BJ (cell line): ENCODE measurements at regions of chr12 and their contacts with region 1.

Region 1: GRCh38 chr12:32155961-32156529 is 49.4 kb downstream of the BICD1 start:
- DNase-seq: no peak
- H3K4me3 ChIP-seq: no peak overlapping the region
- H3K27me3 ChIP-seq: no peaks in the 10 kb centered on the region
- CTCF ChIP-seq: no peak

Region 2: GRCh38 chr12:32074432-32074831 is 81.6 kb before region 1 on chr12:
- CTCF ChIA-PET with region 1: no interaction called
- POLR2A ChIA-PET with region 1: interaction called, 11 read pairs
- DNase-seq: no peak
- H3K4me3 ChIP-seq: no peak overlapping the region
- H3K27me3 ChIP-seq: no peaks in the 10 kb centered on the region
- CTCF ChIP-seq: no peak